Activated B cell treated with CpG ODN at 0.5 μM for 24 hours (primary cell): ENCODE measurements at regions of chr16 and their contacts with region 1.

Region 1: GRCh38 chr16:71610936-71611871 is 14.8 kb upstream of the MARVELD3 start:
- DNase-seq: peak; percentile 83
- ATAC-seq: peak; percentile 76
- H3K4me3 Mint-ChIP-seq: peak overlapping the region; percentile 65
- H3K27ac Mint-ChIP-seq: no peak overlapping the region
- H3K4me1 Mint-ChIP-seq: peaks cover 33% of the 10 kb centered on the region
- H3K27me3 Mint-ChIP-seq: peaks cover 9% of the 10 kb centered on the region
- CTCF ChIP-seq: no peak

Region 2: GRCh38 chr16:71387045-71387871 is 223.9 kb before region 1 on chr16:
- CTCF ChIA-PET with region 1: no interaction called
- POLR2A ChIA-PET with region 1: no interaction called
- intact Hi-C with region 1: no loop called
- DNase-seq: no peak
- ATAC-seq: no peak
- H3K4me3 Mint-ChIP-seq: no peak overlapping the region
- H3K27ac Mint-ChIP-seq: no peak overlapping the region
- H3K4me1 Mint-ChIP-seq: no peaks in the 10 kb centered on the region
- H3K27me3 Mint-ChIP-seq: peaks cover 33% of the 10 kb centered on the region
- CTCF ChIP-seq: no peak

Region 3: DNA sequence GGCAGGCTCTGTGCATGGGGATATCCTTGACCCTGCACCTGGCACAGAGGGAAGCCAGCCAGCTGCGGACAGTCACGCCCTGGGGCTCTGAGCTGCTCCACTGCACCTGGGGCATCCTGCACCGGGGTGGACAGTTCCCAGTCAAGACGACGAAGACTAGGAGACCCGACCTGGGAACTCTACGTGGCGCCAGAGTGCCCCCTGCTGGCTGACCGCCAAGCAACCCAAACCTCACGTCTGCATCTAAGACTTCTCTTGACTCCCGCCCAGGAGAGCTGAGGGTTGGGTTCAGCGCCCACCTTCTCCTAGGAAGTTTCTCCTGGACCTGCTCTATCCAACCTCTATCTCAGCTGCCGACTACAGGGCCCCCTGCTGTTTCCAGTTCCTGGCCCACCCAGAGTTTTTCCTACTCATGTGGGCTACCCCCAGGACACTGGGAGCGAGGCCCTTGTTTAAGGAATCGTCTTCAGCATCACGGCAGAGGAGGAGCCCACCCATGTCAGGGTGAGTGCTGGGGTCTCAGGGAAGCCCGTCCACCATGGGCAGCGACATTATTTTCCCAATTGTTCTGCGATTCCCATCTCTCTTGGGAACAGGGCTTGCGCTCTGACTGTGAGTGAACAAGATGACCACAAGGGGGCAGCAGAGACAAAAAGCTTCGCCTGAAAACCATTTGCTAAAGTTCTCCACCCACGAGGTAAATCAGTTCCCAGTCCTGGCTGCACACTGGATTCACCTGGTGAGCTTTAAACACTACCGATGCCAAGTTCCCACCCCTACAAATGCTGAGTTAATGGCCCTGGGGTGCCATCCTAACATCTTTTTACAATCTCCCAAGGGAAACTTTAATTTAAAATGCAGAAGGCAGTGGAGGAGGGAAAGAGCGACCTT is 198.7 kb before region 1 on chr16:
- CTCF ChIA-PET with region 1: interaction called, 118 read pairs
- POLR2A ChIA-PET with region 1: interaction called, 4 read pairs
- intact Hi-C with region 1: no loop called
- DNase-seq: peak; percentile 36
- ATAC-seq: peak; percentile 57
- H3K4me3 Mint-ChIP-seq: no peak overlapping the region
- H3K27ac Mint-ChIP-seq: no peak overlapping the region
- H3K4me1 Mint-ChIP-seq: peaks cover 9% of the 10 kb centered on the region
- H3K27me3 Mint-ChIP-seq: peaks cover 32% of the 10 kb centered on the region
- CTCF ChIP-seq: peak; percentile 38

Region 4: DNA sequence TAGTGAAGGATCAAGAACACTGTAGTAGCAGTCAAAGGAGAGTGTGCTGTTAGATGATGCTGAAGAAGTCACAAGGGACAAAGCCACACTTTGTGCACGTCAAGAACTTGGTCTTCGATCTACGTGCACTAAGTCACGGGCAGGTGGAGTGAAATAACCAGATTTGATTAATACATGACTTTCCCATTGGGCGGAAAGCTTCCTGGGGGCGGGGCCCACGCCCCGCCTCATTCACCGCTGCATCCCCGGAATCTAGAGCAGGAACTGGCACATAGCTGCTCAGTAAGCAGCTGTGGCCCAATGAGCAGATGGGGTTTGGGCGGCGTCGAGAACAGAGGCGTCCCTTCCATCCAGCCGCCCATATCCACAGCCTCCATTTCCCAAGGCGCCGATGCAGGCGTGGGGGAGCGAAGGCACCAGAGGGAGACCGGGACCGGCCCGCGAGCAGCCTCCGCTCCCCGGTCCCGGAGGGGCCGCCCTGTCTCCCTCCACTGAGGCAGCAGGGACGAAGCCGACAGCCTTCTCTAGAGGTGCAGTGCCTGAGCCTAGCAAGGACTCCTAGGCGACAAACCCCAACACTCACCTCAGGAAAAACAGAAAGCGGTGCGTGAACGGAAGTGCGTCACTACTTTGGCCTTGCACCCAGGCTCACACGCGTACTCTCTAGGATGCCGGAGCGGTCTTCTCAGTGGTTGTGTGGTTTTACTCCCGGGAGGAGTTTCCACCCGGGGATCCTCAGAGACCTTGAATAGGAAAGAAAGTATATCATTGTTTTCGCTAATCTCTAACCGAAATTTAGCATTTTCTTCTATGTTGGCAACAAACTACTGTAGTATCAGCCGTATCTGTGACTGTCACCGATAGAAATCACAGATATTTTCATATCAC is 127.0 kb before region 1 on chr16:
- CTCF ChIA-PET with region 1: interaction called, 5 read pairs
- POLR2A ChIA-PET with region 1: interaction called, 7 read pairs
- intact Hi-C with region 1: loop called (anchors 1 kb)
- DNase-seq: peak; percentile 75
- ATAC-seq: peak; percentile 85
- H3K4me3 Mint-ChIP-seq: peak overlapping the region; percentile 89
- H3K27ac Mint-ChIP-seq: peak overlapping the region; percentile 92
- H3K4me1 Mint-ChIP-seq: peaks cover 17% of the 10 kb centered on the region
- H3K27me3 Mint-ChIP-seq: peaks cover 8% of the 10 kb centered on the region
- CTCF ChIP-seq: no peak

Region 5: GRCh38 chr16:71499775-71500364 is 111.3 kb before region 1 on chr16:
- CTCF ChIA-PET with region 1: interaction called, 54 read pairs
- POLR2A ChIA-PET with region 1: no interaction called
- intact Hi-C with region 1: loop called (anchors 1 kb)
- DNase-seq: no peak
- ATAC-seq: peak; percentile 81
- H3K4me3 Mint-ChIP-seq: no peak overlapping the region
- H3K27ac Mint-ChIP-seq: no peak overlapping the region
- H3K4me1 Mint-ChIP-seq: no peaks in the 10 kb centered on the region
- H3K27me3 Mint-ChIP-seq: peaks cover 24% of the 10 kb centered on the region
- CTCF ChIP-seq: no peak

Region 6: GRCh38 chr16:71537643-71538042 is 73.6 kb before region 1 on chr16:
- CTCF ChIA-PET with region 1: interaction called, 38 read pairs
- POLR2A ChIA-PET with region 1: no interaction called
- intact Hi-C with region 1: loop called (anchors 1 kb)
- DNase-seq: no peak
- ATAC-seq: peak; percentile 65
- H3K4me3 Mint-ChIP-seq: no peak overlapping the region
- H3K27ac Mint-ChIP-seq: no peak overlapping the region
- H3K4me1 Mint-ChIP-seq: peaks cover 16% of the 10 kb centered on the region
- H3K27me3 Mint-ChIP-seq: peaks cover 8% of the 10 kb centered on the region
- CTCF ChIP-seq: no peak

Region 7: GRCh38 chr16:71700831-71701230 is 89.6 kb after region 1 on chr16:
- CTCF ChIA-PET with region 1: no interaction called
- POLR2A ChIA-PET with region 1: interaction called, 12 read pairs
- intact Hi-C with region 1: no loop called
- DNase-seq: no peak
- ATAC-seq: no peak
- H3K4me3 Mint-ChIP-seq: no peak overlapping the region
- H3K27ac Mint-ChIP-seq: no peak overlapping the region
- H3K4me1 Mint-ChIP-seq: peaks cover 15% of the 10 kb centered on the region
- H3K27me3 Mint-ChIP-seq: no peaks in the 10 kb centered on the region
- CTCF ChIP-seq: no peak